AG04449 (cell line): ENCODE measurements at regions of chr4 and their contacts with region 1.

Region 1: DNA sequence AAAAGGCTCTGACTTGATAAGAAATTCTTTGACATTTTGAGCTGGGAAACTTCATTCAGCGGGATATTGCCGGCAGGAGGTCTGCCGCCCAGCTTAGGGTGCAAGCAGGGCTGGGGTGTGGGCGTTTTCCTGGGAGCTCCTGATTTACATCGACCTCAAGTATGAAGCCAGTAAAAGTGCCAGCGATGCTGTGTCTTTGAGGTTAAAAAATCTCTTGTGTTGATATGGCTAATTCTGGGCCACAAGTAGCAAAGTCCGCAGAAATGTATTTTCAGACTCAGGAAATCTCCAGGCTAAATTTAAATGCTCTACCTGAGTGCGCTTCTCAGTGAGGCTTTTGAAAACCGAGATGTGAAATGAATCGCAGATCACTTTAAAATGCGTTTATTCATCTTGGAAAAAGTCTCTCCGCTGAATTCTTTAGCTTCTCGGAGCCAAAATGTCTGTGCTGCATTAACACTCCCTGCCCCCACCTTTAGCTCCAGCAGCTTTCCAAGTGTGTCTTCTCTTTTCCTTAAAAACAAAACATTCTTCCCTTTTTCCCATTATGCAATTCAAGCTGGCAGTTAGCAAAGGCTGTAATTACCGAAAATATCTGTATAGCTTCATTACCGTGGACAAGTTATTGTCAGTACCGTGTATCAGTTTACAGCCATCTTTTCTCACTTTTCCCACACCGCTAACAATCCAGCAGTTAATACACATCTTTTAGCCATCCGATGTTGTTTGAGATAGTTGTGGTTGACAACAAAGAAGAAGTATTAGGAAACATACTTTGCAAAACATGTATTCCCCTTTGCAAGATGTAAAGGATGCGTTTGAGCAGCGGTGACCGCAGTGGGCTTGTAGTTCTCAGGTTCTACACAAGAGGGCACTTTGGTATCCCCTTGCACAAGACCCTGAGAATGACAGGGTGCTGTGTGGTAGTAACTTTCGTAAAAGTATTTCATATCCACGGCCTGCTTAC is 136.0 kb upstream of the STX18 start:
- DNase-seq: no peak
- H3K4me3 ChIP-seq: peak overlapping the region; percentile 32
- CTCF ChIP-seq: peak; percentile 70

Region 2: DNA sequence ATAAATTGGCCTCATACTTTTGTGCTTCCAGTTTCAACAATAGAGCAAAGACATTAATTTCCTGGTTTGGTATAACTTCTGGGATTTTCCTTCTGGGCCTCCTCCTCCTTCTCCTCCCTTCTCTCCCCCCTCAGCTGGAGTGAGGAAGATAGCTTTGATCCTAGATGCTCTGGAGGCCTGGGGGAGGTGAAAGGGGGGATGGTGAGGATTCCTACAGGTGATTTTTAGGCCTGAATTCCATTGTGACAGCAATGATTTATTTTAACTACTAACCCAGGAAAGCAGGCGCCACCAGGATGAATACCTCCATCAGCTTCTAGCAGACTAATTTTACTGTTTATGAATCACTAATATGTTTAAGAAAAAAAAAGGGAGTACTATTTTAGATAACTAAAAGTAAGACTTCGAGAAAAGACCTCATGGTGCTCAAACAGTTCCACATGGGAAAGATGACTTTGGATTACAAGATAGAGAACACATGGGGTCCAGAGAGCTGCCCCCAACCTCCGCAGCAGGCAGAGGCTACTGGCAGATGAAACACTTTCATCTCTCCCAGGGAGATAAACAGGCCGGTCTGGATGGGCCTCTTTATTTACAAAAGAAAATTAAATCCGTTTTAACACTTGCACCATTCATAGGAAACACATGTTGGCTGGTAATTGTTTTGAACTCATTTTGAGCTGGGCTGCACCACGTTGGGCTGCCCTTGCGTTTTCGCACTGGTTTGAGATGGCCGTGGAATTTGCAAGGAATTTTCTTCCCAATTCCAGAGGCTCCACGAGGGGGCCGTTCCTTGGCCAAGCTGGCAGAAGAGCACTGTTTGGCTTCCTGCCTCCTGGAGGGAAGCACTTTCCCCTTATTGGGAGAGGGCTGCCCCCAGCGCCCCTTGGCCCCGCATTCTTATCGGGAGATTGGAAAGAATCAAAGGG is 10.9 kb before region 1 on chr4:
- CTCF ChIA-PET with region 1: interaction called, 35 read pairs
- POLR2A ChIA-PET with region 1: interaction called, 3 read pairs
- DNase-seq: no peak
- H3K4me3 ChIP-seq: no peak overlapping the region; the same call in 1 of the 2 replicates
- CTCF ChIP-seq: peak; percentile 12

Region 3: DNA sequence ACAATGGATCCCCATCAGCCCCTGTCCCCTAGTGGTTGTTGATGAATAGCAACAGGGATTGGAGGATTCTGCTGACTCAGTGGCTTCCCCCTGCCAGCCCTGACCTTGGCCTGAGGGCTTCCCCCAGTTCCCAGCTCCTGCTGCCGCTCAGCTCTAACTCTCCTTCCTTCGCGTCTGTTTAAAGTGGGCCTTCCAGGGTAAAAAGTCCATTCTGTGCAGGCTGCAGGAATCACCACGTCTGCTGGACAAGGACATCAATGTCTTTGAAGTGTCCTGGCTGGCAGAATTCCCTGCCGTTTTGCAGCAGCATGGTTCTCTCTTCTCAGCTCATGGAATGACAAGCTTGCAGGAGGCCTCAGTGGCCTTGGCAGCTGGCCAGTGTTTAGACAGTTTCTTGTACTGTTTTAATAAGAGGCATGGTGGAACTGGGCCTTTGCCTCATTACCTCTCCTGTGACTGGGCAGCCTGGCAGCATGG is 16.5 kb after region 1 on chr4:
- CTCF ChIA-PET with region 1: interaction called, 11 read pairs
- POLR2A ChIA-PET with region 1: no interaction called
- DNase-seq: no peak
- H3K4me3 ChIP-seq: no peak overlapping the region
- CTCF ChIP-seq: peak; percentile 38

Region 4: GRCh38 chr4:4880492-4880891 is 202.7 kb after region 1 on chr4:
- CTCF ChIA-PET with region 1: interaction called, 29 read pairs
- POLR2A ChIA-PET with region 1: no interaction called
- DNase-seq: no peak
- H3K4me3 ChIP-seq: no peak overlapping the region
- CTCF ChIP-seq: no peak